HCT116 (cell line): ENCODE measurements at regions of chr1 and their contacts with region 1.

Region 1: GRCh38 chr1:184664042-184664655 is 90.5 kb downstream of the EDEM3 start:
- DNase-seq: peak; percentile 26
- ATAC-seq: peak; percentile 98
- H3K4me3 ChIP-seq: peak overlapping the region; percentile 18 to 31
- H3K27ac ChIP-seq: no peak overlapping the region
- H3K4me1 ChIP-seq: peaks cover 0 to 6% of the 10 kb centered on the region in 2 experiments; a peak in 2 of 4 replicates
- H3K27me3 ChIP-seq: no peaks in the 10 kb centered on the region
- CTCF ChIP-seq: peak; percentile 74 to 94 (median 88); a peak in 5 of 6 replicates
- POLR2A ChIP-seq: no peak
- RAD21 ChIP-seq: peak; percentile 89

Region 2: DNA sequence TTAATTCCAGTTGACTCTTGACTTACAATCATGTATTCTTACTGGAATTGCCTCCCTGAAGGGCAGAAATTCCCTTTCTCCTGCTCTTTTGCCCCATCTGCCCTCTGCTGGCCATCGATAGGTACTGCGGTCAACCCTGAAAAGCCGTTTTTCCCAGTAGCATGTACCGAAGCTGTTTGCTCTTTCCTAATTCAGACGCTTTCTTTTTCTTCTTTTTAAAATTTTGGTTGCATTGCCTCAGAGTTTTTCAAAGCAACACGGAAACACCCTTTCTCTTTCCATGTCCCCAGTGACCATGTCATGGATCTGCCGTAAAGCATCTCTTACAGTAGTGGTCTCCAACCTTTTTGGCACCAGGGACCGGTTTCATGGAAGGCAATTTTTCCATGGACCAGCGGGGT is 441.5 kb before region 1 on chr1:
- CTCF ChIA-PET with region 1: interaction called, 11 read pairs
- POLR2A ChIA-PET with region 1: no interaction called
- RAD21 ChIA-PET with region 1: interaction called in 1 of 2 experiments, 4 read pairs
- intact Hi-C with region 1: loop called (anchors 5 kb)
- DNase-seq: peak; percentile 29
- ATAC-seq: peak; percentile 75
- H3K4me3 ChIP-seq: 0 out of 4 replicates have a peak overlapping the region, but pooled peaks of 1 of the 2 experiments have one; percentile 2
- H3K27ac ChIP-seq: no peak overlapping the region
- H3K4me1 ChIP-seq: no peaks in the 10 kb centered on the region
- H3K27me3 ChIP-seq: no peaks in the 10 kb centered on the region
- CTCF ChIP-seq: peak; percentile 80 to 95 (median 88)
- POLR2A ChIP-seq: no peak
- RAD21 ChIP-seq: peak; percentile 86

Region 3: GRCh38 chr1:184379111-184379946 is 284.8 kb before region 1 on chr1:
- CTCF ChIA-PET with region 1: interaction called, 13 read pairs
- POLR2A ChIA-PET with region 1: no interaction called
- RAD21 ChIA-PET with region 1: interaction called, 3 to 4 read pairs
- intact Hi-C with region 1: no loop called
- DNase-seq: no peak
- ATAC-seq: peak; percentile 82
- H3K4me3 ChIP-seq: no peak overlapping the region
- H3K27ac ChIP-seq: no peak overlapping the region
- H3K4me1 ChIP-seq: no peaks in the 10 kb centered on the region
- H3K27me3 ChIP-seq: no peaks in the 10 kb centered on the region
- CTCF ChIP-seq: peak; percentile 36 to 46 (median 39); a peak in 4 of 6 replicates
- POLR2A ChIP-seq: no peak
- RAD21 ChIP-seq: peak; percentile 60

Region 4: GRCh38 chr1:184691719-184692324 is 27.7 kb after region 1 on chr1:
- CTCF ChIA-PET with region 1: interaction called, 10 read pairs
- POLR2A ChIA-PET with region 1: no interaction called
- RAD21 ChIA-PET with region 1: interaction called in 1 of 2 experiments, 4 read pairs
- intact Hi-C with region 1: no loop called
- DNase-seq: peak; percentile 13
- ATAC-seq: peak; percentile 67
- H3K4me3 ChIP-seq: no peak overlapping the region
- H3K27ac ChIP-seq: no peak overlapping the region
- H3K4me1 ChIP-seq: no peaks in the 10 kb centered on the region
- H3K27me3 ChIP-seq: no peaks in the 10 kb centered on the region
- CTCF ChIP-seq: peak; percentile 50 to 79 (median 78); a peak in 5 of 6 replicates
- POLR2A ChIP-seq: no peak
- RAD21 ChIP-seq: peak; percentile 73